ENCODE measurements at regions of chr9 and their contacts with region 1.

Region 1: GRCh38 chr9:83622939-83623678 is at the start of gene IDNK:
- DNase-seq: no peak
- H3K4me3 ChIP-seq: peak within 1 kb of the TSS; percentile 65
- CTCF ChIP-seq: no peak

Region 2: GRCh38 chr9:83636813-83637212 is 13.7 kb after region 1 on chr9:
- CTCF ChIA-PET with region 1: interaction called, 25 read pairs
- POLR2A ChIA-PET with region 1: no interaction called
- DNase-seq: no peak
- H3K4me3 ChIP-seq: no peak overlapping the region
- CTCF ChIP-seq: no peak

Region 3: DNA sequence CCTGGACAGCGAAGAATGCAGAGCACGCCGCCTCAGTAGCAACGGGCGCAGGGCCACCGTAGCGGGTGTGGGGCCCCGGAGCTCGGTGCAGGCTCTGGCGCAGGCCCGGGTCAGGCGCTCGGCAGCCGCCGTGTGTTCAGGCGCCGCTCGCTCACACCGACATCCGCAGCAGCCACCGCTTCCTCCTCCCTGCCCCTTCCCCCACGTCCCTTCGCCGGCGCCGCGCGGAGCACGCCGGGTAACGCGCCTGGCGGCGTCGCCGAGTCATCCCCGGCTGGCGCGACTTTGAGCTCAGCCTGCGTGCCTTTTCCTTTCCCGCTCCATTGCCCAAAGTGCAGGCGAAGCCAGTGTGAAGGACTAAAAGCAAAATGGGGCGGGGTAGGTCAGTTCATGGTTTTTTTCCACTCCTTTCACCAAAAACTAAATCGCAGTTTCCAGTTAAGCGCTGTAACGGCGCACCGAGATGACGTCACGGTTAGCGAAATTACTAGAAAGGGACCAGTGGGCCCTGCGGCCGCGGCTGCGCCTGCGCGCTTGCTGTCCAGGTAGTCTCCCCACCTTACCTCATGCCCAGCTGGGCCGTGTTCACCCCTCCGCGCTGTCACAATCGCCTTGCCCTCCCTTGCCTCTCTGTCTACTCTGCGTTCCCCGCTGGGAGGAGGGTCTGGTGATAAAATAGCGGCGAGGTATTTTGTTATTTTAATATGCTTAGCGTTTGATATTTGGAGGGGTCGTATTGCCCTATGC is 84.8 kb after region 1 on chr9 and contains the start of gene UBQLN1:
- CTCF ChIA-PET with region 1: interaction called, 20 read pairs
- POLR2A ChIA-PET with region 1: no interaction called
- DNase-seq: peak; percentile 59
- H3K4me3 ChIP-seq: peak within 1 kb of the TSS; percentile 98
- CTCF ChIP-seq: no peak

Region 4: DNA sequence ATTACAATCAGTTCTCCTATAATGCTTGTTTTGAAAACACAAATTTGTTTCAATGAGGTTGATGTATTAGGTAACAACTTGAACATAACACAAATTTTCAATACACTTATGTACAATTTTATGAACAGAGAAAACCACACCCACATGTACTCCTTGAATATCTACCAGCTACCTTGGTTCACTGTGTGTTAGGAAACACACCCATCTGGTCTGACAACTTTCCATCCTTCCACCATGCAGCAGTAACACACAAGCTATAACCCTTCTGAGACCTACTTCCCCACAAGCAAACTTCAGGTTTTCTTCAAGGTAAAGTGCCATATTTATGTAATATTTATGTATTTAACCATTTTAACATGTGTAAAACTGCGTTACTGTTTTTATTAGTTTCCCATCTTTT is 121.1 kb after region 1 on chr9:
- CTCF ChIA-PET with region 1: no interaction called
- POLR2A ChIA-PET with region 1: no interaction called
- DNase-seq: no peak
- H3K4me3 ChIP-seq: no peak overlapping the region
- CTCF ChIP-seq: no peak

Measured in AG04449 (cell line).